GM13976 (cell line): ENCODE measurements at regions of chr10 and their contacts with region 1.

Region 1: GRCh38 chr10:73879296-73880173 is 5.2 kb upstream of the CAMK2G start:
- DNase-seq: peak; percentile 86
- CTCF ChIP-seq: peak; percentile 89

Region 2: DNA sequence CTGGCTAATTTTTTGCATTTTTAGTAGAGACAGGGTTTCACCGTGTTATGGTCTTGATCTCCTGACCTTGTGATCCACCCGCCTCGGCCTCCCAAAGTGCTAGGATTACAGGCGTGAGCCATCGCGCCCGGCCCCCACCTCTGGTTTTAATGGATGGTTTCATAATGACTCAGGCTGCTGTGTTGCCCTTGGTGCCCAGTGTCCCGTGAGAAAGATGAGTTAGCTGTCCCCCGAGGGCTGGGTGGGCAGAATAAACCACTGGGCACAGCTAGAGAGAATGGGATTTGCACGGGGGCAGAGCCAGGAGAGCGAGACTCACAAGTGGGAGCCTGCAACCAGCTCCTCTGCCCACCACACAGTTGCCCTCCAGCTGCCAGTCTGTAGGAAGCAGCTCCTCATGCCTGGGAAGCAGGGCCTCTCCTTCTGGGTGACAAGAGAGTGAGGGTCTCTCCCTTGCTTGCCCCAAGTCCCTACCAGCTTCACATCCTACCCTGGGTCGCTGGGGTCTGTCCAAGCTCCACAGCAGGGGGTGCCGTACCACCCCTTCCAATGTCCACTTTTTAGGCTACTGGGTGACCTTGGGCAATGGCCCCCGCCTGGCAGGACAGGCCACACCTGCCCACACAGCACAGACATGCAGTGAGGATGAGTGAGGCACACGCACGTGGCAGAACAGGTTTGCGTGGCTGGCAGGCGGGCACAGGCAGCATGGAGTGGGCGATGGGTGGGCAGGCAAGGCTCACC is 52.0 kb before region 1 on chr10:
- in situ Hi-C with region 1: no loop called
- DNase-seq: no peak
- CTCF ChIP-seq: no peak

Region 3: DNA sequence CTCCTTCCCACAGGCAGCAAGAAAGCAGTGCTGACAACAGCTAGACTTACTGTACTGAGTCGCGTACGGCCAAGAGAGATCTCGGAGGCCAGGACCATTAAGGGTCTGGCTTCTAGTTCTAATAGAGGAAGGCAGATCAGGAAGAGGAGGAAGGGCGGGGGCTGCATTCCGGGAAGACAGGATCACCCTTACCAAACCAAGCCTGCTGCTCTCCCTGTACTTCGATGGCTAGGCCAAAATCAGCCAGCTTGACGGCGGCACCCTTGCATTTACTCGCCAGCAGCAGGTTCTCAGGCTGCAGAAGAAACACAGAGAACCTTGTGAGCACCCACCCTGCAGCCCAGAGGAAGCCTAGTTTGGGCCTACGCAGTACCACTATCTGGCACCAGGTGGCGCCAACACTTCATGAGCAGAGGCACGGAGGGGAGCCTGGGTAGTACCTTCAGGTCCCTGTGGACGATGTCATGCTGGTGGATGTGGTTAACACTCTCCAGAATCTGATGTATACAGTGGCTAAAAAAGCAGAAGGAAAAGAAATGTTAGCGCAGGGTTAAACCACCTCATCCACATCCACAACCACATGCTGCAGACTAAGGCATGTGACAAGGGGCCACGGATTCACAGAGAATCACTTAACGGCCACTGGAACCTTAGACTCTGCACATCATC is 30.6 kb before region 1 on chr10:
- in situ Hi-C with region 1: loop called (anchors 5 kb)
- DNase-seq: peak; percentile 93
- CTCF ChIP-seq: peak; percentile 96

Region 4: DNA sequence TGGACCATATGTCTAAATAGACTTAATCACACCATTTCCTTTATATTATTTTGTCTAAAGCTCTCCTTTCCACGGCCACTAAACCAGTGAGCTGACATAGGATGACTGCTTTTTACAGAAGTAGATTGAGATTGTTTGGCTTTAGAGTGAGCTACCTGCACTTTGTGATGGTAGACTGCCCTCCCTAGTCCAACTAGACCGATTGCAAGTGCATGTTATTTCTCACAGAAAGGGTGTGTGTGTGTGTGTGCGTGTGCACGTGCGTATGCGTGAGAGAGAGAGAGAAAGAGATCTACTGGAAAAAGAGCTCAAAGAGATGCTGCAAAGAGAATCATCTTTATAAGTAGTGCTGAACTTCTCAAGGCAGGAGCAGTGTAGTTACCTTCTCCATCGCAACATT is 179.1 kb after region 1 on chr10:
- in situ Hi-C with region 1: no loop called
- DNase-seq: no peak
- CTCF ChIP-seq: no peak

Region 5: DNA sequence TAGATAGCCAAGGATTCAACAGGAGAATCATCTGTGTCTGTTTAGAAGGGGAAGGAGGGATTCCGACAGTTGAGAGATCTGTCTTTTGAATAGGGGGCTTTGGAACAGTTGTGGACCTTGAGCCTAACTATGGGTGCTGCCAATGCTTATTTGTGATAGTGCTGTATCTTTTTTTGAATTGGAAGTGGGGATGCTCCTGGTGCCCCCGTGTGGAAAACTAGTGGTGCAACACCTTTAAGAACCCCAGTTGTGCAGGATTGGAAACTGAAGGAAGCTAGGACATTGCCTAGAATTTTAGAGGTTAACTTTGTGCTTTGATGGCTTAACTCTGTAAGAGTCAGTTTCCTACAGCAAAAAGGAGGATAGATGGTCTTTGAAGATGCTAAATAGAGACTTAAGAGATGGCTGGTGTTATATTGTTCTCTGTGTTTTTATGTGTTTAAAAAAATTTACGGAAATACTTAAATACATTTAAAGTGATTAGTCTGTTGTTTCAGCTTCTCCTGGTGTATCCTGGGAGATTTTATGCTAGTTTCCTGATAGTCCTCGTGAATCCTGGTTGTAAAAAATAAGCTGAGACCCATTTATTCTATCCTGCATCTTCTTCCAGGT is 201.8 kb after region 1 on chr10:
- in situ Hi-C with region 1: loop called (anchors 25 kb)
- DNase-seq: peak; percentile 40
- CTCF ChIP-seq: peak; percentile 56